Transverse colon (tissue), 4 donors: ENCODE measurements at regions of chr16 and their contacts with region 1.

Region 1: GRCh38 chr16:84504420-84505248 is at the start of gene MEAK7:
- DNase-seq: peak; percentile 99
- H3K4me3 ChIP-seq: peak within 1 kb of the TSS; percentile 56 to 77 (median 62)
- H3K27ac ChIP-seq: peak within 1 kb of the TSS; percentile 84 to 88 (median 86)
- H3K4me1 ChIP-seq: peaks cover 14 to 31% (median 21%) of the 10 kb centered on the region in 4 donors
- H3K27me3 ChIP-seq: no peaks in the 10 kb centered on the region
- CTCF ChIP-seq: peak in 1 of 5 experiments; percentile 26
- EP300 ChIP-seq: no peak
- POLR2A ChIP-seq: peak; percentile 69
- total RNA-seq, gene MEAK7: 20.3 to 29.1 (median 21.8) TPM

Region 2: GRCh38 chr16:84294531-84295142 is 210.0 kb before region 1 on chr16 and contains the start of gene WFDC1:
- in situ Hi-C with region 1: no loop called
- intact Hi-C with region 1: no loop called
- DNase-seq: no peak
- H3K4me3 ChIP-seq: peak within 1 kb of the TSS in 3 of 4 donors; percentile 7 to 38 (median 31)
- H3K27ac ChIP-seq: peak within 1 kb of the TSS; percentile 80 to 85 (median 82)
- H3K4me1 ChIP-seq: peaks cover 7 to 22% (median 14%) of the 10 kb centered on the region in 4 donors
- H3K27me3 ChIP-seq: peaks cover 9% of the 10 kb centered on the region
- CTCF ChIP-seq: no peak
- EP300 ChIP-seq: no peak
- POLR2A ChIP-seq: no peak
- total RNA-seq, gene WFDC1: 5.6 to 91.3 (median 7.0) TPM

Region 3: DNA sequence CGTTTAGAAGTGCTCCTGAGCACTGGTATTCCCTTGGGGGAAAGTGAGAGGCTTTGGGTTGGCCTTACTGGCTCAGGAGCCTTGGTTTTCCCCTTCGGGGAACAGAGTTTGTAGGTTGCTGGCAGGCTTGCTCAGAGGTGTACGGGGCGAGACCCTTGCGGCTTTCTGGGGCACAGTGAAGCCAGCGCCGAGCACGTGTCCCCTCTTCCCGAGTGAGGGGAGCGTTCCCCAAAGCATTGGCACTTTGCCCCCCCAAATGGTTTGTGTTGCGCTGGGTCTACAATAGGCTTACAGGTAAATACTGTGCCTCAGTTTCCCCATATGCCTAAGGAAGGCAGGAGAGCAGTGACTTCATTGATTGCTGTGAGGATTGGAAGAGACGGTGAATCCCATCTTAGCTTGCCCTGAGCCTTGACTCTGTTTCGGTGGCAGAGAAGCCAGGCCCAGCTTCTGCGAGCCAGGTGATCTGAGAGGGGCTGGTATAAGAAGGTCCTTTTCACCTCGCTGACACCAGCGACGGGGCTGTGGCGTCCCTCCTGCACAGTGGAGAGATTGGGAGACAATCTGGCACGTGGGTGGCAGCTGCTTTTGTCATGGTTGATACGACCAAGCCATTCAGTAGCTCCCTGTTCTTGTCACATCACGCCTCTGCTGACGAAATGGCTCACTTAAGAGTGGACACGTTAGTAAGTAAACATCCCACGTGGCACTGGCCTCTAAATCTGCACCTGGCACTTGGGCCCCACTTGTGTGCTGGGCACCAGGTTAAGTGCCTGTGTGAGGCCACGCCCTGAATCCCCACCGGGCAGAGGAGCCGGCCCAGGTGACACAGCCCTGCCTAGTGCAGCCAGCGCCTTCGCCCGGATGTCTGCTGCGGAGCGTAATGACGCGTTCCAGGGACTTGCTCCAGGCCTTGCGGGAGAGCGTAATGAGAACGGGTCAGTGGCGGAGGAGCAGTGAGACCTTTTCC is 55.2 kb before region 1 on chr16:
- in situ Hi-C with region 1: no loop called
- intact Hi-C with region 1: no loop called
- DNase-seq: peak; percentile 71
- H3K4me3 ChIP-seq: no peak overlapping the region
- H3K27ac ChIP-seq: peak overlapping the region in 2 of 4 donors; percentile 23 to 52
- H3K4me1 ChIP-seq: no peaks in the 10 kb centered on the region
- H3K27me3 ChIP-seq: no peaks in the 10 kb centered on the region
- CTCF ChIP-seq: no peak
- EP300 ChIP-seq: no peak
- POLR2A ChIP-seq: no peak

Region 4: DNA sequence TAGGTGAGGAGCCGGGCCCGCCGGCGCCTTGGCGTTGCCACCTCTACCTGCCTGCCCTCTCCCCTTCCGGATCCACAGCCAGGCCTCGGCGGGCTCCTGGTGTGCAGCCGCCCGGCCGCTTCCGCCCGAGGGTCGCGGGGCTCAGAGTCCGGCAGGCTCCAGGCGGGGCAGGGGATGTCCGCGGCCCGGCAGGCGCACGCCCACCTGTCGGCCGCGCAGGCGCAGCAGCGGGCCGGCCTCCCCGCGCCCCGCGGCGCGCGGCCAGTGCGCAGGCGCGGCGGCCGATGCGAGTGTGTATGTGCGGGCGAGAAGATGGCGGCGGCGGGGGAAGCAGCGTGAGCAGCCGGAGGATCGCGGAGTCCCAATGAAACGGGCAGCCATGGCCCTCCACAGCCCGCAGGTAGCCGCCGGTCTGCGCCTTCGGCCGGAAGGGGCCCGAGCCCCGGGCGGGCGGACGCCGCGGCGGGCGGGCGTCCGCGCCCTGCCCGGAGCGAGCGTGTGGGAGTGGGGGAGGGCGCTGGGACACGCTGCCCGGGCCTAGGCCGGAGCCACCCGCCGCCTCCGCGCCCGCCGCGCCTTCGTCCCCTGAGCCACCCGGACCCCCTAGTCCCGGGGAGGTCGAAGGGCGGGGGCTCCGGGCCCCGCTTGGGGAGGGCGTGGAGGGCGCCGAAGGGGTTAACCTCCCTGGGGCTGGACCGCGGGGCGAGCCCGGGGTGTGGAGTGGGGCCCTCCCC is 195.2 kb after region 1 on chr16 and contains the start of gene USP10:
- in situ Hi-C with region 1: loop called in 1 of 4 experiments (anchors 25 kb)
- intact Hi-C with region 1: no loop called
- DNase-seq: peak; percentile 86
- H3K4me3 ChIP-seq: peak within 1 kb of the TSS; percentile 96 to 99 (median 98)
- H3K27ac ChIP-seq: peak within 1 kb of the TSS; percentile 90 to 96 (median 94)
- H3K4me1 ChIP-seq: peaks cover 4 to 43% (median 30%) of the 10 kb centered on the region in 4 donors
- H3K27me3 ChIP-seq: no peaks in the 10 kb centered on the region
- CTCF ChIP-seq: no peak
- EP300 ChIP-seq: no peak
- POLR2A ChIP-seq: peak; percentile 12
- total RNA-seq, gene USP10: 23.6 to 56.8 (median 45.4) TPM

Region 5: DNA sequence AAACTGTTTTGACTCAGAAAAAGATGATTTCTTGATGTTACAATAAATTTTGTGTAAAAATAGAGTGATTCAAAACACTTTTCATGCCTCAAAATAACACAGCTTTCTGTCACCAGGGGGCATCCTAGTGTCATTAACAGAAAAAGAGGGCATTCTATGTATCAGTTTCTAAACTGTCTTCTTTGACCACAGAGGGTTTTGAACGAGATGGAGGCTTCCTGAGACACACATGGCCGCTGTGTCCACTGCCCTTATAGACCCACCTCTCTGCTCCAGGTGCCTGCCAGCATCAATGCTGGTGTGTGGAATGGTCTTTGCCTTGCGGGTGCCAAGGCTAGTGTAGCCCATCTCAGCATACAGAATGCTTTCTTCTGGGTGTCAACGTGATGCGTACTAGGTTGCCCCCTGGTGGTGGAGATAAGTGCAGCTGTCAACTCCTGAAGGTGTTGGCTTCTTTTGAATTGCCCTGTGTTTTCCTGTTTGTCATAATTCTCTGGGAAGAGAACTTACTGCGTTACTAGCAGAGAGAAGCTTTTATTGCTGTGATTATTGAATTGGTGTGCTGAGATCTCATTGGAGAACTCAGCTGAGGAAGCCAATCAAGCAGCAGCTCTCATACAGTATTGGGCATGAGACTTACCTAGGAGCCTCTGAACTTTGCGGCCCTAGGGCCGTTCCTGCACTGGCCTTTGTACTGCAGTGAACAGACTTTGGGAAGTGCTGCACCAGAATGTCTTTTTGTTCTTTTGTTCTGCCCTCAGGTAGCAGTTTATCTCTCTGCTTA is 233.8 kb after region 1 on chr16:
- in situ Hi-C with region 1: loop called in 1 of 4 experiments (anchors 25 kb)
- intact Hi-C with region 1: no loop called
- DNase-seq: peak; percentile 91
- H3K4me3 ChIP-seq: no peak overlapping the region
- H3K27ac ChIP-seq: peak overlapping the region; percentile 71 to 79 (median 76)
- H3K4me1 ChIP-seq: peaks cover 24 to 85% (median 49%) of the 10 kb centered on the region in 4 donors
- H3K27me3 ChIP-seq: no peaks in the 10 kb centered on the region
- CTCF ChIP-seq: peak; percentile 81 to 97 (median 93)
- EP300 ChIP-seq: no peak
- POLR2A ChIP-seq: no peak